Endothelial cell of umbilical vein (primary cell): ENCODE measurements at regions of chr9 and their contacts with region 1.

Region 1: DNA sequence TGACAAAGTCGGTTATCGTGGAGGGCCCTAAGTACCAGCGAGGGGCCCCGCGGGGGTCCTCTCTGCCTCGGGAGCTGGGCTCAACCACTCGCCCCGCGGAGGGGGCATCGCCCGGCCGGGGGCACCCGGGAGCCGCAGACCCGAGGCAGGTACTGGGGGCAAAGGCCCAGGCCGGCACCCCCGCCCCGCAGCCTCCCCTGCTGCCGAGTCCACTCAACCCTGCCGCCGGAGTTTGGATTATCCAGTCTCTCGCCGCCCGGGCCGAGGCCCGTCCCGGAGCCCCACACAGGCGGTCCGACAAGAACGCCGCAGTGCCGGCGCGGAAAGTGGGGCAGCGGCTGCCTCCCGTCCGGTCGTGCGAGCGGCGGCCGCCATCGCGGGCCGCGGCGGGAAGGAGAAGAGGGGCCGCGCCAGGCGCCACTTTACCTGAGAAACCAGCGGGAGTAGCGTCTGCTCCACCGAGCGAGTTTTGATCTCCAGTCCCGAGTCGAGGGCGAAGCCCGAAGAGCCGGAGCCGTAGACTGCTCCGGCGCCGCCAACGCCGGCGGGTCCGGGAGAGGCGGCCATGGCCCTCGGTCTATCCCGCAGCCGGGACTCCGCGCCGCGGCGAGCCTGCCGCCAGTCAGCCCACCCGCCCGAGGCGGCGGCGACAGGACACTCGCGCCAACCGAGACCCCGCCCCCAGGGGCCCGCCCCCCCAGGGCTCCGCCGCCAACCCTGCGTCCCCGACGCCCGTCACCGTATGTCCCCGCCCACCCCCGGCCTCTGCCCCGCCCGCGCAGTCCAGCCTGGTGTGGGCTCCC is at the start of gene CTNNAL1:
- DNase-seq: peak; percentile 92
- H3K4me3 ChIP-seq: peak within 1 kb of the TSS; percentile 68 to 81 (median 68)
- H3K27ac ChIP-seq: peak within 1 kb of the TSS; percentile 77
- H3K4me1 ChIP-seq: peaks cover 35% of the 10 kb centered on the region
- H3K27me3 ChIP-seq: no peaks in the 10 kb centered on the region
- CTCF ChIP-seq: no peak
- POLR2A ChIP-seq: peak; percentile 92
- total RNA-seq, gene CTNNAL1: 72.0 and 76.2 TPM in 2 replicates

Region 2: GRCh38 chr9:108953983-108954574 is 59.0 kb before region 1 on chr9:
- CTCF ChIA-PET with region 1: interaction called, 16 read pairs
- POLR2A ChIA-PET with region 1: no interaction called
- dilution Hi-C with region 1: no loop called
- intact Hi-C with region 1: loop called (anchors 2 kb)
- DNase-seq: peak; percentile 78
- H3K4me3 ChIP-seq: no peak overlapping the region
- H3K27ac ChIP-seq: no peak overlapping the region
- H3K4me1 ChIP-seq: peaks cover 20% of the 10 kb centered on the region
- H3K27me3 ChIP-seq: no peaks in the 10 kb centered on the region
- CTCF ChIP-seq: peak in 1 of 2 donors; percentile 34
- POLR2A ChIP-seq: no peak

Region 3: GRCh38 chr9:109035684-109036423 is 22.8 kb after region 1 on chr9:
- CTCF ChIA-PET with region 1: interaction called, 6 read pairs
- POLR2A ChIA-PET with region 1: no interaction called
- dilution Hi-C with region 1: no loop called
- intact Hi-C with region 1: loop called (anchors 1 kb)
- DNase-seq: peak; percentile 94
- H3K4me3 ChIP-seq: no peak overlapping the region
- H3K27ac ChIP-seq: peak overlapping the region; percentile 84
- H3K4me1 ChIP-seq: peaks cover 42% of the 10 kb centered on the region
- H3K27me3 ChIP-seq: no peaks in the 10 kb centered on the region
- CTCF ChIP-seq: no peak
- POLR2A ChIP-seq: no peak

Region 4: DNA sequence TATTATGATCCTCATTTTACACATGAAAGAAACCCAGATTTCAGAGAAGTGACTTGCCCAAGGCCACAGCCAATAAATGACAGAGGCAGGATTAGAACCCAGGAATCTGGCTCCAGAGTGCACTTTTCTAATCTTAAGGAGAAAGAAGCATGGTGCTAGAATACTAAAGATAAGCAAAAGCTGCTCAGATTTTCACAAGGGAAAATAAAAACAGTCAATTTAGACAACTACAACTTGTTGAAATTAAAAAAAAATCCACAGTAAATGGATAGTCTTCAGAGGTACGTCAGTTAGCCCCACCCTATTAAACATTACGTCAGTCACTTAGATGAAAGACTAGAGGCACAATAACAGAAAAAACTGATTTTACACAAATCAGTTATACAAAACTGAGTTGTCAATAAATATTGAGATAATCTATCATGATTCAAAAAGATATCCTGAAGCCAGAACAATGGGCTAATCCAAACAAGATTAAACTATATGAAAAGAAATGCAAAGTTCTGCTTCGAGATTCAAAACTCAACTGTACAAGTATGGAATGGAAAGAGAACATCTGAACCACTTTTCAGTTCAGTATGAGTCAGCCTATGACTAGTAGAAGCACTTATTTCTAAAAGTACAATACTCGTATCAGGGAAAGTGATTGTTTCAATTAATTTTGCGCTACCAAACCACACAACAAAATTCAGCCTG is 97.4 kb after region 1 on chr9:
- CTCF ChIA-PET with region 1: no interaction called
- POLR2A ChIA-PET with region 1: no interaction called
- dilution Hi-C with region 1: no loop called
- intact Hi-C with region 1: loop called (anchors 2 kb)
- DNase-seq: peak; percentile 89
- H3K4me3 ChIP-seq: peak overlapping the region in 1 of 3 experiments; percentile 46
- H3K27ac ChIP-seq: peak overlapping the region; percentile 77
- H3K4me1 ChIP-seq: peaks cover 52% of the 10 kb centered on the region
- H3K27me3 ChIP-seq: no peaks in the 10 kb centered on the region
- CTCF ChIP-seq: no peak
- POLR2A ChIP-seq: no peak

Region 5: DNA sequence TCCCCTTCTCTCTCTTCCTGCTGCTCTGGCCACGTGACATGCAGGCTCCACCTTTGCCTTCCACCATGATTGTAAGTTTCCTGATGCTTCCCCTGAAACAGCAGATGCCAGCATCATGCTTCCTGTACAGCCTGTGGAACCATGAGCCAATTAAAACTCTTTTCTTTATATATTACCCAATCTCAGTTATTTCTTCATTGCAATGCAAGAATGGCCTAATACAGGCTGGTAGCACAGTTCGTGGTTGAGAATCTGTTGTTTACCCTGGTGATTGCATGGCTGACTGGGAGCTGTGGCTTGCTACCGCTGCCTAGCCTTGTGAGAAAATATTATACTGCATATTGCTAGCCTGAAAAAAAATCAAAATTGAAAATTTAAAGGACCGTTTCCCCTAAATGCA is 529.8 kb after region 1 on chr9:
- CTCF ChIA-PET with region 1: no interaction called
- POLR2A ChIA-PET with region 1: no interaction called
- dilution Hi-C with region 1: no loop called
- intact Hi-C with region 1: no loop called
- DNase-seq: no peak
- H3K4me3 ChIP-seq: no peak overlapping the region
- H3K27ac ChIP-seq: no peak overlapping the region
- H3K4me1 ChIP-seq: no peaks in the 10 kb centered on the region
- H3K27me3 ChIP-seq: no peaks in the 10 kb centered on the region
- CTCF ChIP-seq: no peak
- POLR2A ChIP-seq: no peak